ENCODE measurements at regions of chr12 and their contacts with region 1.

Region 1: GRCh38 chr12:78568321-78569020 is 296.1 kb upstream of the SYT1 start:
- DNase-seq: no peak
- H3K4me3 ChIP-seq: no peak overlapping the region
- H3K27ac ChIP-seq: no peak overlapping the region
- H3K4me1 ChIP-seq: no peaks in the 10 kb centered on the region
- H3K27me3 ChIP-seq: no peaks in the 10 kb centered on the region
- CTCF ChIP-seq: no peak

Region 2: DNA sequence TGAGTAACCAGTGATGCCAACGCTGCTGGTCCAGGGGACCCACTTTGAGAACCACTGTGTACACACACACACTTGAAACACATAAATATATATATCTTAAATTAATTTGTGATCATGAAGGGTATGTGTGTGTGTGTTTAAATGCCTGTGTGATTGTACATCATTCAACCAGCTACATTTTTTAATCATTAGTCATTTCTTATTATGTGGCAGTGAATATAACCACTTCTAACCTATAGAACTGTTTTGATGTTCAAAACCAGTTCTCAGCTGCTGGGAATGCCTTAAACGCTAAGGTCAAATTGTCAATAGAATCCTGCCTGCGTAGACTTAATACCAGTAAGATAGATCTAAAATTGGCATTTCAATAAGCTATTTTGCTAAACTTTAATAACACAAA is 626.1 kb after region 1 on chr12:
- CTCF ChIA-PET with region 1: interaction called, 13 read pairs
- POLR2A ChIA-PET with region 1: no interaction called
- intact Hi-C with region 1: no loop called
- DNase-seq: no peak
- H3K4me3 ChIP-seq: no peak overlapping the region
- H3K27ac ChIP-seq: no peak overlapping the region
- H3K4me1 ChIP-seq: 0 out of 2 replicates have a peak, but pooled peaks cover 3% of the 10 kb centered on the region
- H3K27me3 ChIP-seq: no peaks in the 10 kb centered on the region
- CTCF ChIP-seq: no peak

Measured in PC-9 (cell line).